K562 (cell line): ENCODE measurements at regions of chr20 and their contacts with region 1.

Region 1: DNA sequence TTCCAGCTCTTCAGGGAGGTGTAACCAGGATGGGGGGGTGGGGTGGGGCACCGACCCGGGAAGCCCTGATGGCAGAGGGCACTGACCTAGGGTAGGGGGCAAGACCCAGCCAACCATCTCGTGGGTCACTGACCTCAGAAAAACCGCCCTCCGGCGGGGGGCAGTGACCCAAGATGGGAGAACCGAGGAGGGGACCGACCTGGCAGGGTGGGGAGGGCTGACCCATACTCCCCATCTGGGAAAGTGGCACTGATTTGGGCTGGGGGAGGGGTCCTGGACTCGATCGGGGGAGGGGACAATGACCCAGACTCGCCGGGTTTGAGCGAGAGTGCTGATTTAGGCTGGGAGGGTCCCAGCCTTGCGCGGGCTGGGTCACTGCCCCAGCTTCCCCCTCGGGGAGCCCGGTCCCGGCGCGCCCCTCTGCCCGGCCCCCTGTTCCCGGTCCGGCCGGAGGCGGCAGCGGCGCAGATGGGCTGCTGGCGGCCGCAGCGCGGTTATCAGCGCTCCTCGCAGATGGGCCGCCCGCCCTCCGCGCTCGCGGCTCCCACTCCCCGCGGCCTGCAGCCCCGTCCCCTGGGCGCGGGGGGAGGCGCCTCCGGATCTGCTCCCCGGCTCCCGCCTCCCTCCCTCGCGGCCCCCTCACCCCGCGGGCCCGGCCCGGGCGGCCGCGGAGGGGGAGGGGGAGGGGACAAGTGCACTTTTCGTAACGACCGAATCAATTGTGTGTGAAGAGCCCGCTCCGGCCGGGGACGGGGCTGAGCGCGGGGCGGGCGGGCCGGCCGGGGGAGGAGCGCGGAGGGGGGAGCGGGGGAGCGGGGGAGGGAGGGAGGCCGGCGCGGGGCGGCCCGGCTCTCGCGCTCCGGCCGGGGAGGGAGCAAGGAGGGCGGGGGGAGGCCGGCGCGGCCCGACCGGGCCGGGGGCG is 2.2 kb downstream of the NOL4L start:
- DNase-seq: peak; percentile 70 to 83 (median 80)
- ATAC-seq: peak; percentile 31
- H3K4me3 ChIP-seq: peak overlapping the region; percentile 87
- H3K27ac ChIP-seq: peak overlapping the region; percentile 83
- H3K4me1 ChIP-seq: peaks cover 55 to 68% of the 10 kb centered on the region in 2 experiments
- H3K27me3 ChIP-seq: no peaks in the 10 kb centered on the region
- CTCF ChIP-seq: no peak
- EP300 ChIP-seq: no peak
- POLR2A ChIP-seq: no peak
- RAD21 ChIP-seq: peak in 1 of 2 experiments; percentile 17; a peak in 1 of 4 replicates

Region 2: GRCh38 chr20:32521780-32522525 is 61.0 kb before region 1 on chr20:
- CTCF ChIA-PET with region 1: no interaction called
- POLR2A ChIA-PET with region 1: no interaction called
- in situ Hi-C with region 1: no loop called
- intact Hi-C with region 1: loop called (anchors 5 kb)
- DNase-seq: peak; percentile 80 to 86 (median 82)
- ATAC-seq: peak; percentile 97
- H3K4me3 ChIP-seq: no peak overlapping the region
- H3K27ac ChIP-seq: no peak overlapping the region
- H3K4me1 ChIP-seq: peaks cover 5 to 44% of the 10 kb centered on the region in 2 experiments; a peak in 3 of 5 replicates
- H3K27me3 ChIP-seq: no peaks in the 10 kb centered on the region
- CTCF ChIP-seq: peak; percentile 90 to 92 (median 91)
- EP300 ChIP-seq: no peak; the same call in 1 of the 2 replicates
- POLR2A ChIP-seq: no peak
- RAD21 ChIP-seq: peak; percentile 96 to 98

Region 3: DNA sequence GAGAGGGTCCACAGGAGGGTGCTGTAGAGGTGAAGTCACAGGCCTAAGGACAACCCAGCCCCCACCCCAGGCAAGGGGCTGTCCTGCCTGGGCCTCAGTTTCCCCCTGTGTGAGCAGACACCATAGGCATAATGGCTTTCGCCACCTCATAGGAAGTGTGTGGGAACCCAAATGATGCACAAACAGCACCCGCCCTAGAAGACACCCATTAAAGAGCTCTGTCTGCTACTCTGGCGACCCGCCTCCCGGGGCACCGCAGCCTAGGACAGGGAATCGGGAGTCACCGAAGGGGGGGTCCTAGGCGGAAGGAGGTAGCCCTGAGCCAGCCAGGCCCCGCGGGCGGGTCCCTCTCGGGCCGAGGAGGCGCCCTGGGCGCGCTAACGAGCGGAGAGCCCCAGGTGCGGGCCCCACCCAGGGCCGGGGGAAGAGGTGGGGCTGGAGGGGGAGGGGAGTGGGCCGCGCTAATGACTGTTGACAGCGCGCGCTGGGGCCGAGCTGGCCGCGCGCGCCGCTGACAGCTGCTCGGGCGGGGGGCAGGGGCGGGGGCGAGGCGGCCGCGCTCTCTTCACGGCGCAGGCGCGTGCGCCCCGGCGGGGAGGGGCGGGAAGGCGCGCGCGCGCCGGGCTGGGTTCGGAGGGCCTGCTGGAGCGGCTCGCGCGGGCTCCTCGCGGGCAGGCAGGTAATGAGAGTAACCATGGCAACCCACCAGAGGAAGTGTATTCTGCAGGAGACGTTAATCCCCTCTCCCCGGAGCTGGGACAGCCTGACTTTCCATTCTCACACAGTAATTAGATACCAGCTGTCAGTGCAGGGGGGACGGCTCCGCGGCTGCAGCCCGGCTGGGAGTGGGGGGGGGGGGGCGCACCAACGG is 46.7 kb before region 1 on chr20:
- CTCF ChIA-PET with region 1: no interaction called
- POLR2A ChIA-PET with region 1: interaction called, 4 read pairs
- in situ Hi-C with region 1: no loop called
- intact Hi-C with region 1: loop called (anchors 1 kb)
- DNase-seq: peak; percentile 90 to 96 (median 92)
- ATAC-seq: peak; percentile 82
- H3K4me3 ChIP-seq: peak overlapping the region; percentile 37; the same call in 1 of the 2 replicates
- H3K27ac ChIP-seq: peak overlapping the region; percentile 65; the same call in 2 of the 3 replicates
- H3K4me1 ChIP-seq: peaks cover 54 to 65% of the 10 kb centered on the region in 2 experiments
- H3K27me3 ChIP-seq: no peaks in the 10 kb centered on the region
- CTCF ChIP-seq: peak in 1 of 3 experiments; percentile 0; a peak in 1 of 6 replicates
- EP300 ChIP-seq: no peak
- POLR2A ChIP-seq: no peak
- RAD21 ChIP-seq: peak in 1 of 2 experiments; percentile 18; a peak in 1 of 4 replicates

Region 4: DNA sequence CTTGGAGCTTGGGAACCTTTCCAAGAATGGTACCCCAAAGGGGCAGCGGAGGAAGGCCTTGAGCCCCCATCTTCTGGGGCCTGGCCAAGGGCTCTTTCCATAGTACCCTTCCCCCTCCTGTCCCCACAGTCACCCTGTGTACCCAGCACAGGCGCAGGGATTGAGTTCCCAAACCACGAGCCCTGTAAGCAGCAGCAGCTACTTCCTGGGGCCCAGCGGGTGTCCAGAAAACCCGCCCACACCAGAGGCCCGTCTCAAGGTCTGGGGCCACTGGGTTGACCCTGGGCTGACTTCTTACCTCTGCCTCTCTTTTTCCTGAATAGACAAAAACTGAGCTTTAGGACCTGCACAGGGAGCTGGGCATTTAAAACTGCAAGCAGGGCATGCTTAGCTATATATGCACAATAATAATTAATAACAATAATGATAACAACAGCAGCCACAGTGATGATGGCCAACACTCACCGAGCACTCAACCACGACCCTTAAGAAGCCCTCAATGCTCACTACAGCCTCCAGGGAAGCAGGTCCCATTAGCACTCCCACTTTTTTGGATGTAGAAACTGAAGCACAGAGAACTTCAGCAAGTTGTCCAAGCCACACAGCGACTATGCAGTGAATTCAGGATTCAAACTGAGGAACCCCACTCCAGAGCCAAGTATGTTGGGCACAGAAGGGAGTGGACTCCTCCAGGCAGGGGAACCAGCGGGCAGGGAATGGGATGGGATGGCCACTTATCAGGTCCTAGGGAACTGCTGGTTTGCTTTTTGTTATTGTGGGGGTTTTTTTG is 12.3 kb before region 1 on chr20:
- CTCF ChIA-PET with region 1: no interaction called
- POLR2A ChIA-PET with region 1: interaction called, 12 read pairs
- in situ Hi-C with region 1: no loop called
- intact Hi-C with region 1: no loop called
- DNase-seq: peak; percentile 53 to 89 (median 70)
- ATAC-seq: peak; percentile 85
- H3K4me3 ChIP-seq: no peak overlapping the region
- H3K27ac ChIP-seq: peak overlapping the region; percentile 78
- H3K4me1 ChIP-seq: peaks cover 53 to 68% of the 10 kb centered on the region in 2 experiments
- H3K27me3 ChIP-seq: no peaks in the 10 kb centered on the region; a peak in 1 of 5 replicates
- CTCF ChIP-seq: no peak
- EP300 ChIP-seq: peak; percentile 57; the same call in 1 of the 2 replicates
- POLR2A ChIP-seq: no peak
- RAD21 ChIP-seq: 0 out of 4 replicates have a peak, but pooled peaks of 1 of the 2 experiments have one; percentile 23

Region 5: DNA sequence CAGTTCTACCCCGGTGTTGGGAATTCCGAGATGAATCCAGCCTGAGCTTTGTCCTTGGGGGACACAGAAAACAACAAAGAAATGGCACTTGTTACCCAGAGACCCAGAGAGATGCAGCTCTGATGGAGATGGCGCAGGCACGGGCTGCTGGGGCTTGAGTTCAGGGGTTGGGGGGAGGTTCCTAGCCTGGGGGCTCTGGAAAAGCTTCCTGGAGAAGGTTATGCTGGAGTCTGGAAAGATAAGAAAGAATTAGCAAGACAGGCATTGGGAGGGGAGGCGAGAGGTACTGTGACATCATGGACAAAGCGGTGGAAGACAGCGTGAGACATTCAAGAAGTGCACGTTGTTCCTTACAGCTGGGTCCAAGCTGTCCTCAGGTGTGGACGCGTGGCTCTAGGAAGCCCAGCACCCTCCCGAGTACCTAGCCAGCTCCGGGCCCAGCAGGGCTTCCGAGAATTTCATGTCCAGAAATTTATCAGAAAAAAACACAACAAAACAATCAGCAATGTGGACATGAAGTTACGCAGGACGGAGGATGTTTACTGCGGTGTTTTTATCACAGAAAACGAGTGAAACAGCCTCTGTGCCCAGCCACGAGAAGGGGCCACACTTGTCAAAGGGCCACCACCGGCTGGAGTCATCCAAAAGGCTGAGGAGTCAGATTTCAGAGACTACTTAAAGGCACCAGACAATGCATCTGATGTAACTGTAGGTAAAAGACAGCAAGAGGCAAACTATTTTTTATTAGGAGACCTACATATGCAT is 51.3 kb after region 1 on chr20:
- CTCF ChIA-PET with region 1: no interaction called
- POLR2A ChIA-PET with region 1: interaction called, 3 read pairs
- in situ Hi-C with region 1: no loop called
- intact Hi-C with region 1: loop called (anchors 5 kb)
- DNase-seq: peak in 3 of 4 experiments; percentile 45 to 84 (median 64)
- ATAC-seq: peak; percentile 72
- H3K4me3 ChIP-seq: no peak overlapping the region
- H3K27ac ChIP-seq: peak overlapping the region; percentile 85
- H3K4me1 ChIP-seq: peaks cover 57 to 71% of the 10 kb centered on the region in 2 experiments
- H3K27me3 ChIP-seq: no peaks in the 10 kb centered on the region
- CTCF ChIP-seq: no peak
- EP300 ChIP-seq: peak; percentile 57
- POLR2A ChIP-seq: 0 out of 2 replicates have a peak, but pooled peaks have one; percentile 20
- RAD21 ChIP-seq: 0 out of 4 replicates have a peak, but pooled peaks of 1 of the 2 experiments have one; percentile 13